Esophagus squamous epithelium (tissue), 5 donors: ENCODE measurements at regions of chr1 and their contacts with region 1.

Region 1: GRCh38 chr1:172449585-172450534 is 6.0 kb upstream of the PIGC start:
- DNase-seq: no peak
- H3K4me3 ChIP-seq: peak overlapping the region in 1 of 4 donors; percentile 29
- H3K27ac ChIP-seq: peak overlapping the region in 1 of 4 donors; percentile 18
- H3K4me1 ChIP-seq: peaks cover 7 to 41% (median 11%) of the 10 kb centered on the region in 3 donors
- H3K27me3 ChIP-seq: no peaks in the 10 kb centered on the region
- CTCF ChIP-seq: peak; percentile 37 to 89 (median 75)
- POLR2A ChIP-seq: no peak

Region 2: GRCh38 chr1:172497230-172497629 is 47.4 kb after region 1 on chr1:
- intact Hi-C with region 1: no loop called
- DNase-seq: no peak
- H3K4me3 ChIP-seq: no peak overlapping the region
- H3K27ac ChIP-seq: peak overlapping the region in 3 of 4 donors; percentile 14 to 58 (median 38)
- H3K4me1 ChIP-seq: peaks cover 8 to 54% (median 9%) of the 10 kb centered on the region in 3 donors
- H3K27me3 ChIP-seq: no peaks in the 10 kb centered on the region
- CTCF ChIP-seq: no peak
- POLR2A ChIP-seq: no peak

Region 3: GRCh38 chr1:172547071-172547470 is 97.2 kb after region 1 on chr1:
- intact Hi-C with region 1: no loop called
- DNase-seq: no peak
- H3K4me3 ChIP-seq: no peak overlapping the region
- H3K27ac ChIP-seq: no peak overlapping the region
- H3K4me1 ChIP-seq: peaks cover 6 to 56% (median 9%) of the 10 kb centered on the region in 3 donors
- H3K27me3 ChIP-seq: no peaks in the 10 kb centered on the region
- CTCF ChIP-seq: no peak
- POLR2A ChIP-seq: no peak

Region 4: DNA sequence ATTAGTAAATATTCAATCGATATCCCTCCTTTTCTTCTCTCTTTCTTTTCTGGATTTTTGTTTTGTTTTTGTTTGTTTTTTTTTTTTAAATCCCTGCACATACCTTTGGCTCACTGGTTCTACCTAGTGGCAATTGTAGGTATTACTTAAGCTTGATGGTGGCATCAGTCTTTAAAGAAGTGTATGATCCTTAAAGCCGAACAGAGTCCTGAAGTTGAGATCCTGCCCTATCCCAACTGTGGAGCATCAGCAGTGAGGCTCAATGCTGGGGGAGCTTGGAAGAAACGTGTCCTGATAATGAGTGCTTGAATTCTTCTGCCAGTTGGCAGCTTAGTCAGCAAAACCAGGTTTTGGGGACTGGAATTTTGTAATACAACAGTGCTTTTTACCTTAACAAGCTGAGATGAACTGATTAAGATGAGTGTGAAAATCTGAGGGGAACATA is 269.9 kb after region 1 on chr1:
- intact Hi-C with region 1: loop called (anchors 10 kb)
- DNase-seq: no peak
- H3K4me3 ChIP-seq: no peak overlapping the region
- H3K27ac ChIP-seq: peak overlapping the region in 3 of 4 donors; percentile 6 to 52 (median 28)
- H3K4me1 ChIP-seq: peaks cover 0 to 22% (median 9%) of the 10 kb centered on the region in 3 donors
- H3K27me3 ChIP-seq: no peaks in the 10 kb centered on the region
- CTCF ChIP-seq: peak; percentile 45 to 75 (median 56)
- POLR2A ChIP-seq: no peak